ENCODE measurements at regions of chr17 and their contacts with region 1.

Region 1: GRCh38 chr17:45031231-45032173 is 19.9 kb downstream of the DCAKD start:
- DNase-seq: no peak
- ATAC-seq: no peak
- H3K4me3 ChIP-seq: no peak overlapping the region
- H3K4me3 Mint-ChIP-seq: no peak overlapping the region
- H3K27ac ChIP-seq: no peak overlapping the region
- H3K27ac Mint-ChIP-seq: no peak overlapping the region
- H3K4me1 ChIP-seq: no peaks in the 10 kb centered on the region
- H3K4me1 Mint-ChIP-seq: no peaks in the 10 kb centered on the region
- H3K27me3 ChIP-seq: no peaks in the 10 kb centered on the region
- H3K27me3 Mint-ChIP-seq: no peaks in the 10 kb centered on the region
- CTCF ChIP-seq: no peak

Region 2: DNA sequence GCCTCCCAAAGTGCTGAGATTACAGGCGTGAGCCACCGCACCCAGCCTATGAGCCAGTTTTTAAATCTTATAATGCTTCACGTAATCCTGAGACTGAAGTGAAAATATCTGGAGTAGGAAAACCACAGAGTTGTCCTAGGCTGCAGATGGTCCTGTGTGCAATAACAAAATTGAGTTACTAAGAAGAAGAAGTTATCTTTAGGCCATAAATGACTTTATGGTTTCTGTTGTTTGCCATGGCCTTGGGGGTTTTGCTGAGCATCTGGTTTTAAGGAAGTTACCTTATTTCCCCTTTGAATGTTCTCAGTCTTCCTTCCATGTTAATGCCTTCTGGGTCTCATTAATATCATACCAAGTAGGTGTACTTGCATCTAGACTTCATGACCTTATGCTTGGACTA is 46.1 kb after region 1 on chr17:
- CTCF ChIA-PET with region 1: no interaction called
- POLR2A ChIA-PET with region 1: no interaction called
- intact Hi-C with region 1: loop called in 1 of 2 experiments (anchors 5 kb)
- DNase-seq: no peak
- ATAC-seq: no peak
- H3K4me3 ChIP-seq: no peak overlapping the region
- H3K4me3 Mint-ChIP-seq: no peak overlapping the region
- H3K27ac ChIP-seq: no peak overlapping the region
- H3K27ac Mint-ChIP-seq: peak overlapping the region; percentile 19
- H3K4me1 ChIP-seq: peaks cover 6% of the 10 kb centered on the region
- H3K4me1 Mint-ChIP-seq: peaks cover 27% of the 10 kb centered on the region
- H3K27me3 ChIP-seq: no peaks in the 10 kb centered on the region
- H3K27me3 Mint-ChIP-seq: no peaks in the 10 kb centered on the region
- CTCF ChIP-seq: no peak